MCF 10A (cell line): ENCODE measurements at regions of chr1 and their contacts with region 1.

Region 1: DNA sequence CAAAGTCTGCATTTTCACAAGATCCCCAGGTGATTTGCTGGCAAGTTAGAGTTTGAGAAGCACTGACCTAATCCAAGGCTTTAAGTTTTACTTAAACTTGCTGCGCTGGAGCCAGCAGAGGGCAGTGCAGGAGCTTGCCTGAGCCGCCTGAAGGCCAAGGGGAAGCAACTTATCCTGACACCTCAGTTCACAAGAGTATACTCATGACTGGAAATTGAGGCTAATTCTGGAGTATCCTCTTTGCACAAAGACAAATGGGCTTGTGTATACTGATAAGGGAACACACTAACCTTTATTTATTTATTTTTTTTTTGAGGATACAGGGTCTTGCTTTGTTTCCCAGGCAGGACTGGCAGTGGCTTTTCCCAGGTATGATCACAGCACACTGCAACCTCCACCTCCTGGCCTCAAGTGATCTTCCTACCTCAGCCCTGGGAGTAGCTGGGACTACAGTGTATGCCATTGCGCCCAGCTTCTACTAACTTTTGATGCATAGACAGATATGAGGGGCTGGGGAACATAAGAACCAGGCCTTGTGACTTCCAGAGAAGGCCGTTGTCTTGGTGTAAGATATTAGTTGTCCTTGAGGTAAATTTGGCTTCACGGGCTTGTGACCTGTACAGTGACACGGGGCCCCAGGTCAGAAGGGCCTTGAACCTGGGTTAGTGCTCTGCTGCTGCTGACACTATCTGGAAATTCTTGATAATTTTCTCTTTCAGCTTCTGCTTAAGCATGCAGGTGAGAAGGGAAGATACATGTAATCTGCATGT is 29.0 kb upstream of the SLAMF1 start:
- DNase-seq: peak; percentile 74
- H3K4me3 Mint-ChIP-seq: no peak overlapping the region
- H3K27ac Mint-ChIP-seq: no peak overlapping the region
- H3K4me1 Mint-ChIP-seq: no peaks in the 10 kb centered on the region
- H3K27me3 Mint-ChIP-seq: peaks cover 31% of the 10 kb centered on the region
- CTCF ChIP-seq: peak; percentile 90

Region 2: DNA sequence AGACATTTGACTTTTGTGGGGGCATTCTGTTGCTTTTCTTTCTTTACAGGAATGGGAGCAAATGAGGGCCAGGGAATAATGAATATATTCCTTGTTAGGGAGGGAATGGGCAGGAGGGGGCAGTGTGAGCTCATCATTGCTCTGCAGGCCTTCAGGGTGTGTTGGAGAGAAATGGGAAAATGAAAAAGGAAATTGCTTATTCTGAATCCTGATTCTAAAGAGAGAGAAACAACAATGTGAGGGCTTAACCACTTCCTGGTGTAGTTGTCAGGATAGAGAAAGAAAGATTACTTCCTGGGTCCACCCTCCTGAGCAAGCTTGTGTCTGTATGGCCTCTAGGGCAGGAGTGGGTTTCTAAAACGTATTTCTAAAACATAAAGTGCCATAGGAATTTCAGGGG is 247.2 kb before region 1 on chr1:
- CTCF ChIA-PET with region 1: interaction called, 8 read pairs
- POLR2A ChIA-PET with region 1: no interaction called
- intact Hi-C with region 1: loop called (anchors 10 kb)
- DNase-seq: peak; percentile 70
- H3K4me3 Mint-ChIP-seq: no peak overlapping the region
- H3K27ac Mint-ChIP-seq: no peak overlapping the region
- H3K4me1 Mint-ChIP-seq: no peaks in the 10 kb centered on the region
- H3K27me3 Mint-ChIP-seq: peaks cover 8% of the 10 kb centered on the region
- CTCF ChIP-seq: peak; percentile 93

Region 3: DNA sequence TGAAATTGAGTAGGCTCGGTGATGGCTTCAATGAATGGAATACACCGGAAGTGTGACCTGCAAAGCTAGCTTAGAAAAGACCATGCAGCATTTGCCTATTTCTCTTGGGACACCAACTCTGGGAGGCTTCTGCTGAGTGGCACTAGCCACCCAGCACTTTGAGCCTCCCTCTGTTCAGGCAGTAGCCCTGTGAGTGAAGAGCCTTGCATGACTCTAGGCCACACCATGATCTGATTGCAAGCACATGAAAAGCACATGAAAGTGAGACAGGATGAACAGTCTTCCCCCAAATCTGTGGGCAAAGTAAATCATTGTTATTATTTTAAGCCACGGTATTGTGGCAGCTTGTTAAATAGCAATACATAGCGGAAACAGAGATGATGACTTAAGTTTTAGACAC is 33.0 kb after region 1 on chr1:
- CTCF ChIA-PET with region 1: interaction called, 16 read pairs
- POLR2A ChIA-PET with region 1: interaction called, 4 read pairs
- intact Hi-C with region 1: no loop called
- DNase-seq: no peak
- H3K4me3 Mint-ChIP-seq: no peak overlapping the region
- H3K27ac Mint-ChIP-seq: no peak overlapping the region
- H3K4me1 Mint-ChIP-seq: no peaks in the 10 kb centered on the region
- H3K27me3 Mint-ChIP-seq: peaks cover 15% of the 10 kb centered on the region
- CTCF ChIP-seq: no peak

Region 4: GRCh38 chr1:160768295-160768657 is 92.5 kb after region 1 on chr1:
- CTCF ChIA-PET with region 1: interaction called, 22 read pairs
- POLR2A ChIA-PET with region 1: no interaction called
- intact Hi-C with region 1: loop called (anchors 1 kb)
- DNase-seq: peak; percentile 60
- H3K4me3 Mint-ChIP-seq: peak overlapping the region; percentile 56
- H3K27ac Mint-ChIP-seq: peak overlapping the region; percentile 75
- H3K4me1 Mint-ChIP-seq: peaks cover 17% of the 10 kb centered on the region
- H3K27me3 Mint-ChIP-seq: no peaks in the 10 kb centered on the region
- CTCF ChIP-seq: peak; percentile 70

Region 5: DNA sequence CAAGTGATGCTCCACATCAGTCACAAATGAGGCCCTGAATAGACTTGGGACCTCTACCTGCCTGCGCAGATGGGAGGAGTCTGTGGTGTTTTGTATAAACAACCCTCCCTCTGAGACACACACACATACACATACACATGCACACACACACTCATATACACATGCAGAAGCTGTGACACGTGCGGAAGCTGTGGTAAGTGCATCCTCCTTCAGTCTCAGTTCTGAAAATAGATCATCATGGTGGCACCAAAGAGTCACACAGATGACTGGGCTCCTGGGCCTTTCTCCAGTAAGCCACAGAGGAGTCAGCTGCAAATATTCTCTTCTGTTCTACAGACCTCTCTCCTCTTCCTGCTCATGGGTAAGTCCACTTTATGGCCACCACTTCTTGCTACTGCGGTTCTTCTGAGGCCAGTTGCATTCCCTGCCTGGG is 120.1 kb after region 1 on chr1 and contains the start of gene LY9:
- CTCF ChIA-PET with region 1: interaction called, 12 read pairs
- POLR2A ChIA-PET with region 1: no interaction called
- intact Hi-C with region 1: no loop called
- DNase-seq: no peak
- H3K4me3 Mint-ChIP-seq: no peak within 1 kb of the TSS
- H3K27ac Mint-ChIP-seq: no peak within 1 kb of the TSS
- H3K4me1 Mint-ChIP-seq: peaks cover 7% of the 10 kb centered on the region
- H3K27me3 Mint-ChIP-seq: no peaks in the 10 kb centered on the region
- CTCF ChIP-seq: no peak
- total RNA-seq, gene LY9: not detected in 2 replicates